AG04449 (cell line): ENCODE measurements at regions of chr3 and their contacts with region 1.

Region 1: GRCh38 chr3:73086071-73086494 is 24.6 kb downstream of the EBLN2 start:
- DNase-seq: no peak
- H3K4me3 ChIP-seq: no peak overlapping the region
- CTCF ChIP-seq: peak; percentile 63

Region 2: GRCh38 chr3:71542521-71543370 is 1543.3 kb before region 1 on chr3:
- CTCF ChIA-PET with region 1: no interaction called
- POLR2A ChIA-PET with region 1: no interaction called
- DNase-seq: peak; percentile 81
- H3K4me3 ChIP-seq: peak overlapping the region; percentile 36
- CTCF ChIP-seq: no peak

Region 3: DNA sequence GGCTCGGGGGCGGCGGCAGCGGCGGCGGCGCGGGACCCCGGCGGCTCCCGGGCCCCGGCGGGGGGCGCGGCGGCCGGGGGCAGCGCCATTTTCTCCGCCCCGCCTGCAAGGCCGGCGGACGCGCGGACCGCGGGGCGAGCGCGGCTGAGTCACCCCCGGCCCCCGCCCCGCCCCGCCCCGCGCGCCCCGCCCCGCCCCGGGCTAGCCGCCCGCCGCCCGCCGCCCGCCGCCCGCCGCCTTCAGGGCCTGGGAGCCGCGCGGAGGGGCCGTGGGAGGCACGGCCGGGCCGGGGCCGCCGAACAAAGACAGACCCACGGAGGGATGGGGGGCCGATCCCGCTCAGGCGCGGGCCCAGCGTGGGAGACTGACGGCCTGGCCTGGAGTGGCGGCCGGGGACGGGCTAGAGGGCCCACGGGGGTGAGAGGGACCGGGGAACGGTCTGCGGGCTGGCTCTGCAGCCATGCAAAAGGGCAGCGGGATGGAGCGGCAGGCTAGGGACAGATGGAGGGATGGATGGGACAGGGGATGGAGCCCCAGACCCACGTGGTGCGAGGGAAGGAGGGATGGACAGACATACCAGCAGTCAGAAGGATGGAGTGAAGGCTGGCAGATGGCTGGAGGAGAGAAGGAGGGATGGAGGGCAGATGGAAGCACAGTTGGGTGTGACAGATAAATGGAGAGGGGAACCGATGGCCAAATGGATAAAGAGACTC is 1360.6 kb before region 1 on chr3 and contains the start of gene EIF4E3:
- CTCF ChIA-PET with region 1: interaction called, 11 read pairs
- POLR2A ChIA-PET with region 1: no interaction called
- DNase-seq: no peak
- H3K4me3 ChIP-seq: peak within 1 kb of the TSS; percentile 69
- CTCF ChIP-seq: no peak

Region 4: DNA sequence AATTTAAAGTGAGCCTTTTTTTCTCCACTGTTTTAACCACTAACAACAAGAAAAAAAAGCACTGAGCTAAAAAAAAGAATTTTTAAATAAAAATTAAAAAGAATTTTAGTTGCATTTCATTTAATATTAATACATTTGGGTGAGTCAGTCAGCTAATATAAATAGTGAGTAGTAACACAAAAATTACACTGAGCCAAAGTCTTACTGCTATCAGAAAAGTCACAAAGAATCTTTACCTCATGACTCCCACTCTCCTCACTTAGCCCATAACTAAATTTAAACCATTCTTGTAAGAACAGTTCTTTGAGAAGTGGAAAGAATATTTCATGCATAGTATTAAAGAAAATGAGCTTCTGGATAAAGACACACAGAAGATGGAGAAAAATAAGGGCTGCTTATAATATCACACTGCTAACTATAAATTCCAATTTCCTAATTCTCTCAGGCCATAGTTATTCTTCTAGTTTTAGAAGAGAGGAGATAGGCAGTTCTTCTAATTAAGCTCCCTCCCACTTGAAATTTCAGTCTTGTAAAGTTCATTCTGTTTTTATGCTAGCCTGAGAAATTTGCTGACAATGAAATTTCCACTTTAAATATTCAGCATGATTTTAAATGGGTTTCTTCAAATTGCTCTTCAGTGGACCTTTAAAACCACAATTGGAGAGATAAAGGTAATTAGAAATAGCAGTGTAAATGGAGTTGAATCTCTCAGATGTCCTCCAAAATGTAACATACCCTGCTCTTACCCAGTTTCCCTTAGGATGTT is 255.4 kb before region 1 on chr3:
- CTCF ChIA-PET with region 1: interaction called, 12 read pairs
- POLR2A ChIA-PET with region 1: no interaction called
- DNase-seq: no peak
- H3K4me3 ChIP-seq: no peak overlapping the region
- CTCF ChIP-seq: no peak

Region 5: DNA sequence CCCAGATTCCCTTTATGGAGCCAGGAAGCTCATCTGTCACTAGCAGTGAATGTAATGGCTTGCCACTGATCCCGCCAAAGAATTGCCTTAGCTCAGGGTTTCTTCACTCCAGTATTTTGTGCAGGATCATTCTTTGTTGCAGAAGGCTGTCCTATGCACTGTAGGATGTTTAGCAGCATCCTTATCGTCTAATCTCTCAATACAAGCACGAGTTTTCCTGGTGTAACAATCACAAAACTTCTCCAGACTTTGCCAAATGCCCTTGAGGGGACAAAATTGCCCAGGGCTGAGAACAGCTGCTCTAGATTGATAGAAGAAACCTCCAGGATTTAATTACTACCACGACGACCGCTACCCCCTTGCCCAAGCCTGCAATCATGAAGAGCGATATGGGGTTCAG is 231.1 kb before region 1 on chr3:
- CTCF ChIA-PET with region 1: interaction called, 135 read pairs
- POLR2A ChIA-PET with region 1: no interaction called
- DNase-seq: no peak
- H3K4me3 ChIP-seq: no peak overlapping the region
- CTCF ChIP-seq: no peak

Region 6: DNA sequence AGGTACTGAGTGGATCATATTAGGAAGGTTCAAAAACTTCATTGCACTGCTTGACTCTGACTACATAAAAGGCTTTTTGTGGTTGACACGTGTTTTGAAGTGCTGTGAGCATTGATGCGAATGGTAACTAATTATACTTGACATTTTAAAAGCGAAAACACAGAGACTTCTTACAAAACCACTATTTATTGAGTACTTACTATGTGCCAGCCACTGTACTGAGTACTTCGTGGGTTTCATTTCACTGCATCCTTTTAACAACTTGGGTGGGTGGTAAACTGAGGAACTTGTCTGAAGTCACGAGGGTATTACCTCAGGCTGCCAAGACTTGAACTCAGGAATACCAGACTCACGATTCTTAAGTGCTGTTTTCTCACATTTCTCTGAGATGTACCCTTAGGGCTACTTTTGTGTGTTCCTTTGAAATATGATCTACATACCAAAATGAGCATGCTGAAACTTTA is 134.8 kb before region 1 on chr3:
- CTCF ChIA-PET with region 1: interaction called, 10 read pairs
- POLR2A ChIA-PET with region 1: no interaction called
- DNase-seq: no peak
- H3K4me3 ChIP-seq: no peak overlapping the region
- CTCF ChIP-seq: no peak